Common myeloid progenitor, CD34-positive (primary cell): ENCODE measurements at regions of chr1 and their contacts with region 1.

Region 1: GRCh38 chr1:8848663-8849386 is 29.7 kb downstream of the ENO1 start:
- DNase-seq: peak; percentile 80 to 87 (median 87)
- H3K4me3 ChIP-seq: peak overlapping the region in 1 of 7 experiments; percentile 5
- H3K27ac ChIP-seq: no peak overlapping the region
- H3K4me1 ChIP-seq: peaks cover 0 to 39% (median 32%) of the 10 kb centered on the region in 4 experiments
- H3K27me3 ChIP-seq: no peaks in the 10 kb centered on the region

Region 2: GRCh38 chr1:8571200-8571984 is 277.4 kb before region 1 on chr1:
- CTCF ChIA-PET with region 1: interaction called, 15 read pairs
- POLR2A ChIA-PET with region 1: no interaction called
- DNase-seq: peak; percentile 55 to 75 (median 68)
- H3K4me3 ChIP-seq: peak overlapping the region in 1 of 7 experiments; percentile 30
- H3K27ac ChIP-seq: peak overlapping the region; percentile 30 to 70
- H3K4me1 ChIP-seq: peaks cover 0 to 18% (median 9%) of the 10 kb centered on the region in 4 experiments
- H3K27me3 ChIP-seq: no peaks in the 10 kb centered on the region

Region 3: DNA sequence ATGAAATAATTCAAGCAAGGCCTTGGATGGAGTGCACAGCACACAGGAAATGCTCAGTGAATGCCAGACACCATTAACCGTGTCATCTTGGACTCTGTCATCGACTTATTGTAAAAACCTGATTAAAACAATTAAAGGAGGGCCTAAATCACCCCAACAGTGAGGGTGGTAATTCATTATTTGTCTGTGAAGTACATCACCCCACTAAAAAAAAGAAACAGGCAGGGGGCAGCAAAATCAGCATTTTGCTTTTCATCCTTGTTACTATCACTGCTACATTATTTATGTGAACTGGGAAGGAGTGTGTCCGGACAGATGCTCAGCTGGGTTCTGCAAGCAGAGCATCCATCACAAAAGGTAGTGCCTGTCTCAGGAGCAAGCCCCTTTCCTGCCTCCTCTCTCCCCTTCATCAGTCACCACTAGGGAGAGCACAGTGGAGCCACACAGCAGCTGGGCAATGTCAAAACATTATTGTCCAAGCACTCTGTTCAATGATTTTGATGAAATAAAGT is 129.9 kb before region 1 on chr1:
- CTCF ChIA-PET with region 1: interaction called, 37 read pairs
- POLR2A ChIA-PET with region 1: no interaction called
- DNase-seq: no peak
- H3K4me3 ChIP-seq: no peak overlapping the region
- H3K27ac ChIP-seq: no peak overlapping the region
- H3K4me1 ChIP-seq: peaks cover 14 to 74% (median 23%) of the 10 kb centered on the region in 4 experiments
- H3K27me3 ChIP-seq: no peaks in the 10 kb centered on the region

Region 4: DNA sequence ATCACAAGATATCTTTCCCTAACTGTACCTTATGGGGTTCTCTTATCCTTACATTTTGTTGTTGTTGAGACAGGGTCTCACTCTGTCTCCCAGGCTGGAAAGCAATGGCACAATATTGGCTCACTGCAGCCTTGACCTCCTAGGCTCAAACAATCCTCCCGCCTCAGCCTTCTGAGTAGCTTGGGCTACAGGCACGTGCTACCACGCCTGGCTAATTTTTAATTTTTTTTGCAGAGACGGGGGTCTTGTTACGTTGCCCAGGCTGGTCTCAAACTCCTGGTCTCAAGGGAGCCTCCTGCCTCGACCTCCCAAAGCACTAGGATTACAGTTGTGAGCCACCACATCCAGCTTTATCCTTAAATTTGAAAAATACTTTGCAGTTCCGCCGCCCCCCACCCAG is 41.8 kb before region 1 on chr1:
- CTCF ChIA-PET with region 1: interaction called, 13 read pairs
- POLR2A ChIA-PET with region 1: no interaction called
- DNase-seq: no peak
- H3K4me3 ChIP-seq: no peak overlapping the region
- H3K27ac ChIP-seq: no peak overlapping the region
- H3K4me1 ChIP-seq: peaks cover 0 to 10% (median 4%) of the 10 kb centered on the region in 4 experiments
- H3K27me3 ChIP-seq: no peaks in the 10 kb centered on the region

Region 5: DNA sequence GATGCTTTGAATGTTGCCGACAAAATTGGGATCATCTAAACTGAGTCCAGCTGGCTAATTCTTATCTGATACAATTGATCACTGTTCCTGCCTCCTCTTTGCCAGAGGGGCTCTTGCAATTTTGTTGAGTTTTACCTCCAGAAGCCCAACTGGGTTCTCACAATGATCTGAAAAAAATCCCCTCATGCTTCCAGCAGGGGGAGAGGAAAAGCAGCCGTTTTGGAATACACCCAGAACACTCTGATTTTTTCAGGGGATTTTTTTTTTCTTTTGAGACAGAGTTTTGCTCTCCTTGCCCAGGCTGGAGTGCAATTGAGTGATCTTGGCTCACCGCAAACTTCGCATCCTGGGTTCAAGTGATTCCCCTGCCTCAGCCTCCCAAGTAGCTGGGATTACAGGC is 17.5 kb before region 1 on chr1:
- CTCF ChIA-PET with region 1: interaction called, 31 read pairs
- POLR2A ChIA-PET with region 1: no interaction called
- DNase-seq: peak in 2 of 3 donors; percentile 61 to 64
- H3K4me3 ChIP-seq: no peak overlapping the region
- H3K27ac ChIP-seq: no peak overlapping the region
- H3K4me1 ChIP-seq: peaks cover 0 to 10% (median 3%) of the 10 kb centered on the region in 4 experiments
- H3K27me3 ChIP-seq: no peaks in the 10 kb centered on the region